Activated CD8-positive, alpha-beta memory T cell treated with anti-CD3 and anti-CD28 coated beads, Interleukin-2, amount 10 ng/mL, durations not matched to agents 7 days and 5 days (primary cell): ENCODE measurements at regions of chr6 and their contacts with region 1.

Region 1: GRCh38 chr6:39302669-39303424 is 11.4 kb downstream of the KCNK17 start:
- DNase-seq: peak; percentile 93
- ATAC-seq: peak; percentile 99
- H3K4me3 Mint-ChIP-seq: peak overlapping the region; percentile 44
- H3K27ac Mint-ChIP-seq: peak overlapping the region; percentile 30
- H3K4me1 Mint-ChIP-seq: peaks cover 5% of the 10 kb centered on the region
- H3K27me3 Mint-ChIP-seq: peaks cover 10% of the 10 kb centered on the region

Region 2: DNA sequence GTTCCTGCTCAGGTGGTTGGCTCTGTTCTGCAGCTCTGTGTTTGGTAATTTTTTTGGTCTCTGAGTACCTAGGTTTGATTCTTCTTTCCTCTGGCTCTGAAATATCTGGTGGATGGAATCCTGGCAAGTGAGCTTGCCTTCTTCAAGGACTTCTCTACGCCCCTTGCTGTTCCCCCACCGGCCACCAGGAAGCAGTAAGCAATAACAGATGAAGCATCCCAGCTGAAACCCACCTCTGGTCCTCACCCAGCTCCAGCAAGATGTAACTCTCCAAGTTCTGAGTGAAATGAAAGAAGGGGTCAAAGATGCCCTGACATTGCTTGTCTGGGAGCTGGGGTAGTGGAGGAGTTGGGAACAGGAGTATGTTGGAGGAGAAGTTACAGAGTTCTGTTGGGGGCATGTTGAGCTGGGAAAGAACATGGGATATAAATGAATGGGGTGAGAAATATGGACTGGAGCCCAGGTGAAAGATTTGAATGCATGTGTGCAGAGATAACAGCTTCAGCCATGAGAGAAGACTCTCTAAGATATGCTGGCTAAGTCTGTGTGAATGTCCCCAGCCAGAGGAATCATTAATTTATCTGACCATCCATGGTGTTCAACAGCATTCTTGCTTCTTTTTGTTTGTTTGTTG is 305.6 kb before region 1 on chr6:
- CTCF ChIA-PET with region 1: interaction called, 12 read pairs
- DNase-seq: peak; percentile 48
- ATAC-seq: no peak
- H3K4me3 Mint-ChIP-seq: no peak overlapping the region
- H3K27ac Mint-ChIP-seq: no peak overlapping the region
- H3K4me1 Mint-ChIP-seq: no peaks in the 10 kb centered on the region
- H3K27me3 Mint-ChIP-seq: peaks cover 60% of the 10 kb centered on the region

Region 3: DNA sequence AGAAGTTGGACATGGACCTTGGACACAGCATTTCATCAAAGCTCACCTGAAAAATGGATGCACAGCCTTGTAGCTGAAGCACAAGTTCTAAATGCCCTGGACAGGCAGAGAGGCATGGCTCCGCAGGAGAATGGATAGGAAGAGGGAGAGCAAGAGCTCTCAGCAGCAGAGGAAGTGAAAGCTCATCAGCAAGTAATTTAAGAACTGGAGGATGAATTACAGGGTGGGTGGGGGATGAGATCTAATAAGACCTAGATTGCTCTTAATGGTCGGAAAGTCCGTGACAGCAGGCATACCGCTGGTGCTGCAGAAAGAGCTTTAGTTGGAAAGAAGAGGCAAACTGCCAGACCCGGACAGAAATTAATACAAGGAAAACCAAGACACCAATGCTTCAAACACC is 150.6 kb before region 1 on chr6:
- CTCF ChIA-PET with region 1: interaction called, 25 read pairs
- DNase-seq: no peak
- ATAC-seq: no peak
- H3K4me3 Mint-ChIP-seq: no peak overlapping the region
- H3K27ac Mint-ChIP-seq: no peak overlapping the region
- H3K4me1 Mint-ChIP-seq: peaks cover 28% of the 10 kb centered on the region
- H3K27me3 Mint-ChIP-seq: peaks cover 31% of the 10 kb centered on the region

Region 4: GRCh38 chr6:39166189-39166911 is 136.5 kb before region 1 on chr6:
- CTCF ChIA-PET with region 1: interaction called, 306 read pairs
- DNase-seq: peak; percentile 89
- ATAC-seq: peak; percentile 94
- H3K4me3 Mint-ChIP-seq: no peak overlapping the region
- H3K27ac Mint-ChIP-seq: no peak overlapping the region
- H3K4me1 Mint-ChIP-seq: peaks cover 12% of the 10 kb centered on the region
- H3K27me3 Mint-ChIP-seq: no peaks in the 10 kb centered on the region

Region 5: GRCh38 chr6:39189915-39190544 is 112.8 kb before region 1 on chr6:
- CTCF ChIA-PET with region 1: interaction called, 24 read pairs
- DNase-seq: peak; percentile 47
- ATAC-seq: peak; percentile 68
- H3K4me3 Mint-ChIP-seq: no peak overlapping the region
- H3K27ac Mint-ChIP-seq: no peak overlapping the region
- H3K4me1 Mint-ChIP-seq: peaks cover 19% of the 10 kb centered on the region
- H3K27me3 Mint-ChIP-seq: no peaks in the 10 kb centered on the region

Region 6: GRCh38 chr6:39228992-39229767 is 73.7 kb before region 1 on chr6 and contains the start of gene KCNK5:
- CTCF ChIA-PET with region 1: interaction called, 29 read pairs
- DNase-seq: peak; percentile 93
- ATAC-seq: peak; percentile 92
- H3K4me3 Mint-ChIP-seq: peak within 1 kb of the TSS; percentile 85
- H3K27ac Mint-ChIP-seq: peak within 1 kb of the TSS; percentile 98
- H3K4me1 Mint-ChIP-seq: peaks cover 40% of the 10 kb centered on the region
- H3K27me3 Mint-ChIP-seq: no peaks in the 10 kb centered on the region
- total RNA-seq, gene KCNK5: 19.1 to 30.8 TPM

Region 7: DNA sequence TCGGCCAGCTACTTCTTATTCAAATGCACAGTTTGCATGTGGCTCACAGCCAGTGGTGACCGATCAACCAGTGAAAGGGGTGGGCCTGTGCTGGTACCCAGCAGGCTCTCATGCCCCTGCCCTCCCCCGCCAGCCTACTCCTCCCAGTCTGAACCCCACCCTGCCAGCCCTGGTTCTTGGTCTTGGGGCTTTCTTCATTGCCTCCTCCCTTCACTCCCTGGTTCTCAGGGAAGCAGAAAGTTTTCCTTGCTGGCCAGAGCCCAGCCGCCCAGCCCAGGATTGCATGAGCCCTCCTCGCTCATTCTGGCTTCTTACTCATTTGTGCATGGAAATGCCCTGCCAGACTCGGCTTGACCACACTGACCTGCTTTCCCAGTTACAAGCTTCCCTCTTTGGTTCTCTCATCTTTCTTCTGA is 29.4 kb before region 1 on chr6:
- CTCF ChIA-PET with region 1: no interaction called
- DNase-seq: no peak
- ATAC-seq: no peak
- H3K4me3 Mint-ChIP-seq: no peak overlapping the region
- H3K27ac Mint-ChIP-seq: no peak overlapping the region
- H3K4me1 Mint-ChIP-seq: no peaks in the 10 kb centered on the region
- H3K27me3 Mint-ChIP-seq: peaks cover 5% of the 10 kb centered on the region

Region 8: GRCh38 chr6:39347906-39348585 is 45.2 kb after region 1 on chr6:
- CTCF ChIA-PET with region 1: no interaction called
- DNase-seq: peak; percentile 69
- ATAC-seq: peak; percentile 64
- H3K4me3 Mint-ChIP-seq: no peak overlapping the region
- H3K27ac Mint-ChIP-seq: no peak overlapping the region
- H3K4me1 Mint-ChIP-seq: peaks cover 2% of the 10 kb centered on the region
- H3K27me3 Mint-ChIP-seq: peaks cover 4% of the 10 kb centered on the region